GM10248 (cell line): ENCODE measurements at regions of chr14 and their contacts with region 1.

Region 1: DNA sequence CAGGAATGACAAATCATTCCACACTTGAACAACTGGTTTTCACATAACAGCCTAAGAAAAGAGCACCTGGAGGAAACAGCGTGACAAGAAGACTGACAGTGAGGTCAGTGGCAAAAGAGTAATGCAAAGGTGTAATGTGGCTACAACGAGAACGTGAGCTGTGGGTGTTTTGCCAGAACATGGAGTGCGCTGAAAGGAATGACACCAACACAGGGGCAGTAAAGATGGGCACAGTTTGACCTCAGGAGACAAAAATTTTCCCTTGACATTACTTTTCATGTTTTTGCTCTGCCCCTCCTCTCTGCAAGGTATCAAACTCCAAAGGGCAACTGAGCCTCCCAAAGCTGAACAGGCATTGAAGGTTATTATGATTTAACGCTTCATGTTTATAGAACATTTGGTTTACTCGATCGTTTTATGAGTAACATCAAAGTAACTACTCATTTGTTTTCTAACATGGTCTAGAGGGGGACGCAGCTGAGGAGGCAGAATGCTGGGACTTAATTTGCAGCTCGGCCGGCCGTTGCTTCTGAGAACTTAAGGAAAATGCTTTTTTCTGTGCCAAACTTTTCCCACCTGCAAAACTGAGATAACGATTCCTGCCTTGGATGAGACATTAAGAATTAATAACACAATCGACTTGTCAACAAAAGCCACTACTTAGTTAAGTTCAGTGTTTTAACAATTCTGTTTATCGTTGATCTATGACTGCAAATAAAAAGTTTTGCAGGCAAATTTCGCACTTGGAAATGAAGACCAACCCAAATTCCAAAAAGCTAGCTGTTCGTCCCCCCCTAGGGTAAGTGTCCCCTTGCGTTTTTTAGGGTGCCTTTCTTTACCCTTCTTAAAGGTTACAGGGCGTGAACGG is 954 bp downstream of the HAUS4 start:
- DNase-seq: no peak
- CTCF ChIP-seq: no peak

Region 2: GRCh38 chr14:22945642-22946041 is 10.3 kb before region 1 on chr14:
- CTCF ChIA-PET with region 1: interaction called, 17 read pairs
- POLR2A ChIA-PET with region 1: no interaction called
- DNase-seq: no peak
- CTCF ChIP-seq: no peak

Region 3: GRCh38 chr14:22966783-22967269 is 10.9 kb after region 1 on chr14:
- CTCF ChIA-PET with region 1: interaction called, 88 read pairs
- POLR2A ChIA-PET with region 1: no interaction called
- DNase-seq: no peak
- CTCF ChIP-seq: no peak

Region 4: DNA sequence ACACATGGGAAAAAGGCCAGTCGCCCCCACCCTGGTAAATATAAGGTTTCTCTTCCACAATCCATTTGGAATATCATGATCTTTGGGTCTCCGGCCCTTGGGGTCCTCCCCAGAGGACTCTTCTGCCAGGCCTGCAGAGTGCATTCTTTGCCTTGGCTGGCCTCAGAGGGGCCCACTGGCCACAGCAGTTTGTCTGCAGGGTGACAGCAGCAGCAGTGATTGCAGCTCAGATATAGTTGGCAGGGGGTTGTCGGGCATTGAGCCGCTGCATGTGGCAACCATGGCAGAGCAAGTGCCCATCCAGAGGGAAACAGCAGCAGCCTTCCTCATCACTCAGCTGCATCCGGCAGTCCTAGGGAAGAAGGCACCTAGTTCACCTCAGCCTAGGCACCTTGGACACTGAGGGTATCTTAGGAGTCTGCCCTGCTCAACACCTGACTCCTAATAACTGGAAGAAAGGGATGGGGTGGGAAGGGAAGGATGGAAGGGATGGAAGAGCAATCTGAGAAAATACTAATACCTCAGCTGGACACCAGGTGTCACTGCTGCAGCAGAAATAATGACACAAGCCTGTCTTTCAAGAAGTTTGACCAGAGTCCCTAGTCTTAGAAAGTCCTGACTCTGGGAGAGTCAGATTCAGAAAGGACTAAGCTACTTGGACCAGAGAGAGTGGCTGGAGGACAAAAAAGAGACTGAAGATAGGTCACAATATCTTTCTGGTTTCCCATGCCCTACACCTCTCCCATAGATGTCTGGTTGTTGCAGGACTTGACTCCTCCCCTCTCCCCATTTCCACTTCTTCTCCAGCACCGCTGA is 17.5 kb after region 1 on chr14:
- CTCF ChIA-PET with region 1: interaction called, 88 read pairs
- POLR2A ChIA-PET with region 1: no interaction called
- DNase-seq: peak; percentile 63
- CTCF ChIP-seq: peak; percentile 80